ENCODE measurements at regions of chr11 and their contacts with region 1.

Region 1: GRCh38 chr11:85854557-85855340 is 434 bp upstream of the CCDC83 start:
- DNase-seq: peak; percentile 94
- H3K4me3 ChIP-seq: peak overlapping the region; percentile 40 to 82 (median 49)
- H3K27ac ChIP-seq: peak overlapping the region; percentile 92
- H3K4me1 ChIP-seq: peaks cover 4% of the 10 kb centered on the region
- H3K27me3 ChIP-seq: no peaks in the 10 kb centered on the region
- CTCF ChIP-seq: peak; percentile 58 to 79
- POLR2A ChIP-seq: peak; percentile 65

Region 2: GRCh38 chr11:85595285-85595884 is 259.4 kb before region 1 on chr11:
- CTCF ChIA-PET with region 1: interaction called, 6 read pairs
- POLR2A ChIA-PET with region 1: no interaction called
- dilution Hi-C with region 1: no loop called
- intact Hi-C with region 1: loop called (anchors 1 kb)
- DNase-seq: peak; percentile 50
- H3K4me3 ChIP-seq: no peak overlapping the region
- H3K27ac ChIP-seq: no peak overlapping the region
- H3K4me1 ChIP-seq: no peaks in the 10 kb centered on the region
- H3K27me3 ChIP-seq: no peaks in the 10 kb centered on the region
- CTCF ChIP-seq: peak; percentile 19 to 30
- POLR2A ChIP-seq: no peak

Region 3: DNA sequence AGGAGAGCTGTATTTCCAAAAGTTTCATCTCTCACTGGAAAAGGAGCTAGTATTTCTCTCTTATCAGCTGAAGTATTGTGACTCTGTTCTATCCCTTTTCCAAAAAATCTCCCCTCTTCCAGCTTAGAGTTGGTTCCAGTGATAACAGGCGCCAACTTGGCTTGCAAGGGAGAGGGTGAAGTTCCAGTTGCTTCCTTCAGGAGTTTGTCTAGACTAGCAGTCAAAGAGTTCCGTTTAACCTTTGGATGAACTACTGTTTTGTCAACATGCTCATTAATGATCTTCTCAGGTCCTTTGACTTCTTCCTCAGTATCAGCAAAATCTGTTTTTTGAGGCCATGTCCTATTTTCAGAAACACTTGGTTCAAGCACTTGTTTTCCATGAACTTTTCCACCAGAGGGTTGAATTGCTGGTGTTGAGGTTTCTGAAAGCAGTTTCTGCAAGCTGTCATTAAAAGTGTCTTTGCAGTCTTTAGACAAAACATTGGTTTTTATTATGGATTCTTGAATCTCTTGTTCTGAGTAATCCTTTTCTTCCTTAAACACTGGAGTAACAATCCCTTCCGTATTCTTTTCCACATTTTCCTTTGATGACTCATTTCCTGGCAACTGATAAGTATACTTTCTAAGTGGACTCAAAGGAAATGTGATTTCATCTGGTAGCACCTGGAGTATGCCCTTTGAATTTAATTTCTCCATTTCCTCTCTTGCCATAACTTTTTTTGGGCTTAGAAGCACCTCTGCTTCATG is 129.1 kb before region 1 on chr11:
- CTCF ChIA-PET with region 1: interaction called, 4 read pairs
- POLR2A ChIA-PET with region 1: no interaction called
- dilution Hi-C with region 1: no loop called
- intact Hi-C with region 1: loop called (anchors 10 kb)
- DNase-seq: peak; percentile 92
- H3K4me3 ChIP-seq: peak overlapping the region in 1 of 3 experiments; percentile 25
- H3K27ac ChIP-seq: peak overlapping the region; percentile 86
- H3K4me1 ChIP-seq: peaks cover 26% of the 10 kb centered on the region
- H3K27me3 ChIP-seq: no peaks in the 10 kb centered on the region
- CTCF ChIP-seq: no peak
- POLR2A ChIP-seq: no peak

Region 4: GRCh38 chr11:85800595-85801342 is 54.0 kb before region 1 on chr11:
- CTCF ChIA-PET with region 1: no interaction called
- POLR2A ChIA-PET with region 1: no interaction called
- dilution Hi-C with region 1: no loop called
- intact Hi-C with region 1: no loop called
- DNase-seq: no peak
- H3K4me3 ChIP-seq: no peak overlapping the region
- H3K27ac ChIP-seq: no peak overlapping the region
- H3K4me1 ChIP-seq: no peaks in the 10 kb centered on the region
- H3K27me3 ChIP-seq: peaks cover 11 to 23% of the 10 kb centered on the region in 2 experiments
- CTCF ChIP-seq: no peak
- POLR2A ChIP-seq: no peak

Region 5: GRCh38 chr11:85884581-85885021 is 29.9 kb after region 1 on chr11:
- CTCF ChIA-PET with region 1: interaction called, 3 read pairs
- POLR2A ChIA-PET with region 1: no interaction called
- dilution Hi-C with region 1: no loop called
- intact Hi-C with region 1: loop called (anchors 1 kb)
- DNase-seq: no peak
- H3K4me3 ChIP-seq: no peak overlapping the region
- H3K27ac ChIP-seq: no peak overlapping the region
- H3K4me1 ChIP-seq: no peaks in the 10 kb centered on the region
- H3K27me3 ChIP-seq: peaks cover 2 to 4% of the 10 kb centered on the region in 2 experiments
- CTCF ChIP-seq: no peak
- POLR2A ChIP-seq: no peak

Region 6: DNA sequence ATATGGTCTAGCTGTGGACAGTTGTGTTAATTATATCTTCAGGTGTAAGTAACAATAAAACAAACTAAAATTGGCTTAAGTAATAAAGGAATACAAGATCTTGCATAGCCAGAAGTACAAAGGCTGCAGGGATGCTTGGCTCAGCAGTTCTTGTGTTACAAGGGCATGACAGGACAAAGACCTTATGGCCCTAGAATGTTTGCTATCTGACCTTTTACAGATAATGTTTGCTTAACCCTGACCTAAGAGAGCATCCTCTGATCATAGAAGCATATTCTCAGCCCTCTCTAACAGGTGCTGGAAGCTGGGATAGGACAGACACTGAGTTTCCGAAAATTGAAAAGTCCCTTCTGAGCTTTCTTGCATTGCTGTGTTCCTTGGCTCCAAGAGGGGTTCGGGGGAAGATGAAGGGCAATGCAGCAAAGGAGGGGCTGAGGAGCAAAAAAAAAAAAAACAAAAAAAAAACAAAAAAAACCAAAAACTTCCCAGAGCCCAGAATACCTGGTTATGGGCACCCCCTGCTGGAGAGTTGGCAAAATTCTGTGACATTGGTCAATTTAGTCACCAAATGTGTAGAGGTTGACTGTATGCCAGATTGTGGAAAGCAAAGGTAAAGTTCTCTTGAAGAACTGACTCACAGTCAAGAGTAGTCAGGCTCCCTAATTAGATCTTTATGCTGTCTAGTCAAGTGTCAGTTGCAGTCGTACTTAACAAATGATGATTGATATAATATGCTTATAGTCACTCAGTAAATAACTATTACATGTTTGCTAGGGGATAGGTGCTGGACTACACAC is 436.9 kb after region 1 on chr11:
- CTCF ChIA-PET with region 1: interaction called, 23 read pairs
- POLR2A ChIA-PET with region 1: no interaction called
- dilution Hi-C with region 1: no loop called
- intact Hi-C with region 1: loop called (anchors 1 kb)
- DNase-seq: peak; percentile 49
- H3K4me3 ChIP-seq: no peak overlapping the region
- H3K27ac ChIP-seq: no peak overlapping the region
- H3K4me1 ChIP-seq: no peaks in the 10 kb centered on the region
- H3K27me3 ChIP-seq: peaks cover 0 to 3% of the 10 kb centered on the region in 2 experiments
- CTCF ChIP-seq: peak; percentile 59 to 68
- POLR2A ChIP-seq: no peak

Region 7: GRCh38 chr11:86818466-86819192 is 963.9 kb after region 1 on chr11:
- CTCF ChIA-PET with region 1: no interaction called
- POLR2A ChIA-PET with region 1: no interaction called
- dilution Hi-C with region 1: no loop called
- intact Hi-C with region 1: loop called (anchors 1 kb)
- DNase-seq: peak; percentile 84
- H3K4me3 ChIP-seq: no peak overlapping the region
- H3K27ac ChIP-seq: peak overlapping the region; percentile 77
- H3K4me1 ChIP-seq: peaks cover 53% of the 10 kb centered on the region
- H3K27me3 ChIP-seq: no peaks in the 10 kb centered on the region
- CTCF ChIP-seq: peak; percentile 41 to 45
- POLR2A ChIP-seq: no peak

Measured in endothelial cell of umbilical vein (primary cell).